GM12878 (cell line): ENCODE measurements at regions of chr5 and their contacts with region 1.

Region 1: GRCh38 chr5:134586866-134587524 is 45.6 kb downstream of the SAR1B start:
- DNase-seq: peak; percentile 45
- ATAC-seq: peak; percentile 96
- H3K4me3 ChIP-seq: no peak overlapping the region
- H3K27ac ChIP-seq: no peak overlapping the region
- H3K4me1 ChIP-seq: peaks cover 6% of the 10 kb centered on the region
- H3K27me3 ChIP-seq: no peaks in the 10 kb centered on the region
- CTCF ChIP-seq: peak; percentile 81 to 88 (median 87)
- EP300 ChIP-seq: no peak
- POLR2A ChIP-seq: no peak
- RAD21 ChIP-seq: peak; percentile 90

Region 2: DNA sequence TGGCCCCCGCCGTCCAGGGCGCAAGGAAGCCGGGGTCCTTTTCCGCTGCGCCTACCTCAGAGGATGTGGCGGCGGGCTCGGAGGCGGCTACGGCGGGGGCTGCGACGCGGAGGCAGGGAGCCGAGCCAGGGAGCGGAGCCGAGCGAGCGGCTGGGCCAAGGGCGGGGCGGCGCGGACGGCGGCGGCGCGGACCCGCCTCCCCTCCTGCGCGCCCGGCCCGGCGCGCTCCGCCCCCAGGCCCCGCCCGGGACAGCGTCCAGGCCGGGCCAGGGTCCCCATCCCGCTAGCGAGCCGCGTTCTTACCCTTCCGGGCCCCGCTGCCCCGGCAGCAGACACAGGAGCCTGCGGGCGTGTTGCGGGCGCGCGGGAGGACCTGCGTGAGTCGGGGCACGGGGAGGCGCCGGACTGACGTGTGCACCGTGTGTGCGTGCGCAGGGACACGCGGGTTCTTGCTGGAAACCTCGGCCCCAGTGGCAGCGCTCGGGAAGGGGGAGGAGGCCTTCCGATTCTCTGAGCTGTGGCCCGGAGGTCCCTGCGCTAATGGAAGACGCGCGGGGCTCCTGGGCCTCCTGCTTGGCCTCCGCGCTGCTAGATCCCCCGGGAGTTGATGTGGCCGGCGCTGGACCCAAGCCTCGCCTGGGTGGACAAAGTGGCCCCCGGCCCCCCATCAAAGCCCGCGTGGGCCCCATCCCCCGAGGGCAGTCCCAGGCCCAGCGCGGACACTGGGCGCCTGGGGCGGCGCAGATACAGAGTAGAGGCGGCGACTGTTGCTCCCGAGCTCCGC is 582.2 kb before region 1 on chr5 and contains the start of gene VDAC1:
- CTCF ChIA-PET with region 1: no interaction called
- POLR2A ChIA-PET with region 1: no interaction called
- RAD21 ChIA-PET with region 1: no interaction called
- SMC1A ChIA-PET with region 1: no interaction called
- in situ Hi-C with region 1: no loop called
- intact Hi-C with region 1: no loop called
- DNase-seq: no peak
- ATAC-seq: peak; percentile 86
- H3K4me3 ChIP-seq: peak within 1 kb of the TSS; percentile 88
- H3K27ac ChIP-seq: peak within 1 kb of the TSS; percentile 95
- H3K4me1 ChIP-seq: peaks cover 19% of the 10 kb centered on the region
- H3K27me3 ChIP-seq: no peaks in the 10 kb centered on the region
- CTCF ChIP-seq: 0 out of 6 replicates have a peak, but pooled peaks of 1 of the 3 experiments have one; percentile 2
- EP300 ChIP-seq: no peak
- POLR2A ChIP-seq: peak; percentile 87
- RAD21 ChIP-seq: no peak
- polyA plus RNA-seq, gene VDAC1: 276 to 376 TPM

Region 3: GRCh38 chr5:134304311-134304710 is 282.7 kb before region 1 on chr5:
- CTCF ChIA-PET with region 1: interaction called, 69 read pairs
- POLR2A ChIA-PET with region 1: no interaction called
- RAD21 ChIA-PET with region 1: interaction called, 15 read pairs
- SMC1A ChIA-PET with region 1: interaction called, 17 read pairs
- in situ Hi-C with region 1: no loop called
- intact Hi-C with region 1: loop called (anchors 1 kb)
- DNase-seq: no peak
- ATAC-seq: no peak
- H3K4me3 ChIP-seq: no peak overlapping the region
- H3K27ac ChIP-seq: no peak overlapping the region
- H3K4me1 ChIP-seq: no peaks in the 10 kb centered on the region
- H3K27me3 ChIP-seq: no peaks in the 10 kb centered on the region
- CTCF ChIP-seq: no peak
- EP300 ChIP-seq: no peak
- POLR2A ChIP-seq: no peak
- RAD21 ChIP-seq: no peak

Region 4: GRCh38 chr5:134609232-134609851 is 22.3 kb after region 1 on chr5:
- CTCF ChIA-PET with region 1: interaction called, 38 read pairs
- POLR2A ChIA-PET with region 1: interaction called, 7 read pairs
- RAD21 ChIA-PET with region 1: interaction called, 26 read pairs
- SMC1A ChIA-PET with region 1: interaction called, 22 read pairs
- in situ Hi-C with region 1: no loop called
- intact Hi-C with region 1: no loop called
- DNase-seq: peak; percentile 41
- ATAC-seq: peak; percentile 83
- H3K4me3 ChIP-seq: no peak overlapping the region; the same call in 1 of the 2 replicates
- H3K27ac ChIP-seq: peak overlapping the region; percentile 68
- H3K4me1 ChIP-seq: peaks cover 17% of the 10 kb centered on the region
- H3K27me3 ChIP-seq: no peaks in the 10 kb centered on the region
- CTCF ChIP-seq: no peak
- EP300 ChIP-seq: no peak
- POLR2A ChIP-seq: no peak
- RAD21 ChIP-seq: no peak

Region 5: DNA sequence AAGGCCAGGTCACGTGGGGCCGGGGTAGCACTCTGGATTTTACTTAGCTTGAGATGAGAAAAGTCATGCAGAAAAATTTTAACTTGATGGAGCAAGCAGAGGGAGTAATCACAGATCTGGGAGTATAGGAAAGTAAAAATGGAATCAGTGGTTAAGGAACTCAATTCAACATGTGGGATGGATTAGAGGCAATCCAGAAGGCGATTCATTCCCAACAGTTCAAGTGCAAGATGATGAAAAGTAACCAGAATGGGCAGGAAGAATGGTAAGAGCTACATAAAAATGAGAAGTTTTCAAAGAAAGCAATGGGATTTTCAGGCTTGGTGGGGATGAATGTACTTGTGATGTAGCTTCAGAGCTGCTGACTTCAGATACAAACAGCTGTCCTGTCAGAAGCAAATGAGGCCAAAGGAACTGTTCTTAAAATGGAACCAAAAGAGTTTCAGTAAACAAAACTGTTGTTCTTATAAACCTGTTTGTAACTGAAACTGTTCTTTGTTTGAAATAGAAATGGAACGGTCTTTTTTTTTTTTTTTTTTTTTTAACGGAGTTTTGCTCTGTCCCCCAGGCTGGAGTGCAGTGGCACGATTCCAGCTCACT is 56.0 kb after region 1 on chr5:
- CTCF ChIA-PET with region 1: interaction called, 13 read pairs
- POLR2A ChIA-PET with region 1: interaction called, 10 read pairs
- RAD21 ChIA-PET with region 1: interaction called, 7 read pairs
- SMC1A ChIA-PET with region 1: interaction called, 7 read pairs
- in situ Hi-C with region 1: no loop called
- intact Hi-C with region 1: loop called (anchors 5 kb)
- DNase-seq: peak; percentile 62
- ATAC-seq: peak; percentile 42
- H3K4me3 ChIP-seq: no peak overlapping the region
- H3K27ac ChIP-seq: peak overlapping the region; percentile 57
- H3K4me1 ChIP-seq: peaks cover 29% of the 10 kb centered on the region
- H3K27me3 ChIP-seq: no peaks in the 10 kb centered on the region
- CTCF ChIP-seq: no peak
- EP300 ChIP-seq: no peak
- POLR2A ChIP-seq: no peak
- RAD21 ChIP-seq: no peak

Region 6: DNA sequence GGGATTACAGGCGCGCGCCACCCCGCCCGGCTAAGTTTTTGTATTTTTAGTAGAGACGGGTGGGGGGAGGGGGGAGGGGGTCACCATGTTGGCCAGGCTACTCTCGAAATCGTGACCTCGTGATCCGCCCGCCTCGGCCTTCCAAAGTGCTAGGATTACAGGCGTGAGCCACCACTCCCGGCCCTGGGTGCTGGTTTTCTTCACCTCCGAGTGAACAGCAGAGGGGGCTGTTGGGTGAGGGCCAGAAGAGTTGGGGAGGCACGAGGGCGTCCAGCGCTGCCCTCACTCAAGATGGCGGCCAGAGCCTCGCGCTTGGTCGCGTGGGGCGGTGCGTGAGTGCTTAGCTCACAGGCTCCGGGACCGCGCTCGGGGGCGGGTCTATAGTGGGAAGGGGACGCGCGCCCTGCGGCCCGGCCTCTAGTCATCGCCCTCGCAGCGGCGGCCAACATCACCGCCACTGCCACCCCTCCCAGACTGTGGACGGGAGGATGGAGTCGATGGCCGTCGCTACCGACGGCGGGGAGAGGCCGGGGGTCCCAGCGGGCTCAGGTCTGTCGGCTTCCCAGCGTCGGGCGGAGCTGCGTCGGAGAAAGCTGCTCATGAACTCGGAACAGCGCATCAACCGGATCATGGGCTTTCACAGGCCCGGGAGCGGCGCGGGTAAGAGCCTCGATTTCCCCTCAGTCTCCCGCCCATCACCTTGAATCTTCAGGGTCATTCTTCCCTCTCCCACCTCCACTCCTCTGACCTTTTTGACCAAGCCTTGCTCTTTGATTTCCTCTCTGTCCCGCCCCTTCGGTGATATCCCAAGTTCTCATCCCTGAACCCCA is 151.4 kb after region 1 on chr5 and contains the start of gene CAMLG:
- CTCF ChIA-PET with region 1: interaction called, 13 read pairs
- POLR2A ChIA-PET with region 1: interaction called, 4 read pairs
- RAD21 ChIA-PET with region 1: interaction called, 10 read pairs
- SMC1A ChIA-PET with region 1: interaction called, 5 read pairs
- in situ Hi-C with region 1: no loop called
- intact Hi-C with region 1: no loop called
- DNase-seq: peak; percentile 92
- ATAC-seq: peak; percentile 97
- H3K4me3 ChIP-seq: peak within 1 kb of the TSS; percentile 90
- H3K27ac ChIP-seq: peak within 1 kb of the TSS; percentile 71
- H3K4me1 ChIP-seq: no peaks in the 10 kb centered on the region
- H3K27me3 ChIP-seq: no peaks in the 10 kb centered on the region
- CTCF ChIP-seq: peak; percentile 67 to 84 (median 74)
- EP300 ChIP-seq: no peak
- POLR2A ChIP-seq: peak; percentile 97
- RAD21 ChIP-seq: peak; percentile 60
- polyA plus RNA-seq, gene CAMLG: 27.0 to 51.7 TPM